Heart right ventricle (tissue), 16 donors: ENCODE measurements at regions of chr1 and their contacts with region 1.

Region 1: DNA sequence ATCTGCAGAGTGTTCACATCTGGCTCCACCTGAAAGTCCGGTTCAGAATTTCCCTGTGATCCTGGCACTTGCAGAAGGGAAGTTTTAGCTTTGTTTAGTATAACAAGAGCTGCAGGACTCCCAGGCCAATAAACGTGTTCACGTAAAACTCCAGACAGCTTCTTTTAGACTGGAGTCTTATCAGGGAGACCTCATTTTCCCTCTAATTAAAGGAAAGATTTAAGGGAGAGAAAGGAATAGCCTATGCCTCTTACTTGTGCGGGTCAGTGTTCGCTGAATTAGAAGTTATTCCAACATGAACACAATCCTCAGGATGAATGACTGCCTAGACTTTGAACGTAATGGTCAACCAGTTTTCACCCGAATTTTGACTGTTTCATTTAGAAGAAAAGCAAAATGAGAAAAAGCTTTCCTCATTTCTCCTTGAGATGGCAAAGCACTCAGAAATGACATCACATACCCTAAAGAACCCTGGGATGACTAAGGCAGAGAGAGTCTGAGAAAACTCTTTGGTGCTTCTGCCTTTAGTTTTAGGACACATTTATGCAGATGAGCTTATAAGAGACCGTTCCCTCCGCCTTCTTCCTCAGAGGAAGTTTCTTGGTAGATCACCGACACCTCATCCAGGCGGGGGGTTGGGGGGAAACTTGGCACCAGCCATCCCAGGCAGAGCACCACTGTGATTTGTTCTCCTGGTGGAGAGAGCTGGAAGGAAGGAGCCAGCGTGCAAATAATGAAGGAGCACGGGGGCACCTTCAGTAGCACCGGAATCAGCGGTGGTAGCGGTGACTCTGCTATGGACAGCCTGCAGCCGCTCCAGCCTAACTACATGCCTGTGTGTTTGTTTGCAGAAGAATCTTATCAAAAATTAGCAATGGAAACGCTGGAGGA is 202.1 kb upstream of the SGIP1 start:
- DNase-seq: peak; percentile 68 to 83
- ATAC-seq: peak; percentile 44 to 87 (median 66)
- H3K4me3 ChIP-seq: peak overlapping the region; percentile 32 to 72 (median 60)
- H3K27ac ChIP-seq: peak overlapping the region; percentile 74 to 97 (median 89)
- H3K4me1 ChIP-seq: peaks cover 0 to 77% (median 33%) of the 10 kb centered on the region in 9 donors
- H3K27me3 ChIP-seq: no peaks in the 10 kb centered on the region
- CTCF ChIP-seq: peak in 7 of 9 donors; percentile 13 to 42 (median 35)

Region 2: GRCh38 chr1:66265796-66266195 is 66.1 kb before region 1 on chr1:
- intact Hi-C with region 1: loop called in 7 of 10 experiments (anchors 2 to 10 kb)
- DNase-seq: no peak
- ATAC-seq: peak in 7 of 8 donors; percentile 34 to 84 (median 52)
- H3K4me3 ChIP-seq: no peak overlapping the region
- H3K27ac ChIP-seq: peak overlapping the region in 6 of 10 donors; percentile 8 to 73 (median 44)
- H3K4me1 ChIP-seq: peaks cover 4 to 84% (median 45%) of the 10 kb centered on the region in 9 donors
- H3K27me3 ChIP-seq: no peaks in the 10 kb centered on the region
- CTCF ChIP-seq: peak in 2 of 9 donors; percentile 22 to 26

Region 3: DNA sequence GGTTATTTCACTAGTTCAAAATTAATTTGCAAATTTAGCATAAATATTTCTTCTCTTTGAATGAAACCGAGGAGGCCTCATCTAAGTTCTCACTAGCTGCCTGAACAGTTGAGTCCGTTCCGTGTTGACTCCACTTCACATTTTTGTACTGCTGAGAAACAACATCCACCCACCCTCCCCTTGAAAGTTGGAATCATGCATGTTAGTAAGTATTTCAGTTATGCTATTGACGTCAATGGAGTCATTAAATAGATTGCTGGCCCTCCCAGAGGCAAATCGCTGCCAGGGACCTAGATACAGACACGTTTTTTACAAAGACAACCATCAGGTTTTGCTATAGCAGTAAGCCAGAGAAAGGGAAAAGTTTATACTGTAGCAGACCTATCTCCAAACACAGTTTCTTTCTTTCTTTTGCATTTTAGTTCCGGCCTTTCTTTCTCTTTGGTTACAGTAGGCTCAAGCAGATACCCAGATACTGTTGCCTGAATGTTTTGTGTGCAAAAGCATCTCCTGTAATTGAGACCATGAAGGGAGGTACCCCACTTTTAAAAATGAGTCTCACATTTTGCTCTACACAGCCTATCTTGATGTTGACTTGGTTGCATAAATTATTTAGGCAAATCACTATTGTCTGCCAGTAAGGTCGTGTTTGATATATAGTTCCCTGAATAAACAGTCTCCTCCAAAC is 60.5 kb before region 1 on chr1:
- intact Hi-C with region 1: loop called (anchors 1 to 10 kb)
- DNase-seq: peak; percentile 69 to 95
- ATAC-seq: peak; percentile 89 to 96 (median 94)
- H3K4me3 ChIP-seq: peak overlapping the region in 7 of 10 donors; percentile 3 to 41 (median 20)
- H3K27ac ChIP-seq: peak overlapping the region; percentile 63 to 91 (median 88)
- H3K4me1 ChIP-seq: peaks cover 12 to 95% (median 81%) of the 10 kb centered on the region in 9 donors
- H3K27me3 ChIP-seq: no peaks in the 10 kb centered on the region
- CTCF ChIP-seq: no peak

Region 4: GRCh38 chr1:66282343-66282852 is 49.5 kb before region 1 on chr1:
- intact Hi-C with region 1: loop called in 3 of 10 experiments (anchors 5 to 10 kb)
- DNase-seq: peak in 1 of 2 donors; percentile 45
- ATAC-seq: peak in 7 of 8 donors; percentile 30 to 78 (median 54)
- H3K4me3 ChIP-seq: no peak overlapping the region
- H3K27ac ChIP-seq: peak overlapping the region in 7 of 10 donors; percentile 1 to 77 (median 42)
- H3K4me1 ChIP-seq: peaks cover 0 to 63% (median 24%) of the 10 kb centered on the region in 9 donors
- H3K27me3 ChIP-seq: no peaks in the 10 kb centered on the region
- CTCF ChIP-seq: peak in 5 of 9 donors; percentile 23 to 45 (median 37)

Region 5: GRCh38 chr1:66300972-66301451 is 30.9 kb before region 1 on chr1:
- intact Hi-C with region 1: no loop called
- DNase-seq: no peak
- ATAC-seq: peak in 7 of 8 donors; percentile 46 to 85 (median 68)
- H3K4me3 ChIP-seq: peak overlapping the region in 5 of 10 donors; percentile 10 to 34 (median 27)
- H3K27ac ChIP-seq: peak overlapping the region in 8 of 10 donors; percentile 7 to 74 (median 48)
- H3K4me1 ChIP-seq: peaks cover 0 to 39% (median 5%) of the 10 kb centered on the region in 9 donors
- H3K27me3 ChIP-seq: no peaks in the 10 kb centered on the region
- CTCF ChIP-seq: no peak

Region 6: GRCh38 chr1:66380452-66381212 is 48.7 kb after region 1 on chr1:
- intact Hi-C with region 1: no loop called
- DNase-seq: no peak
- ATAC-seq: peak in 5 of 8 donors; percentile 46 to 66 (median 55)
- H3K4me3 ChIP-seq: no peak overlapping the region
- H3K27ac ChIP-seq: no peak overlapping the region
- H3K4me1 ChIP-seq: peaks cover 0 to 39% (median 1%) of the 10 kb centered on the region in 9 donors
- H3K27me3 ChIP-seq: no peaks in the 10 kb centered on the region
- CTCF ChIP-seq: no peak

Region 7: DNA sequence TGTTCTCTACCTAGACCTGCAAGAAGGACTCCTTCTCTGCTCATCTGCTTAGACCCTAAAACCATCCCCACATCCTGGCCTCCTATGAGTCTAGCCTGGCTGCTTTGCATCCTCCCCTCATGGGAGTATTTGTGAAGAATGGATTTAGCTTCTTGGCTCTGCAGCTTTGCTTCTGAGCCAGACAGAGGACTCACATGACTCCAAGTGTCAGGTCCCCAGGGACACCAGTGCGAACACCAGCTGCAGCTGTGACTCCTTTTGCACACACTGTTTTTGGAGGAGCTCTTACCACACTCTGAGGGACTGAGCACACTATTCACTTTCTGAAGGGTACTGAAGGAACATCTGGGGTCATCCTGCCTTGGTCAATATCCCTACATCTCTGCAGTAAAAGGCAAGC is 70.3 kb after region 1 on chr1:
- intact Hi-C with region 1: loop called in 2 of 10 experiments (anchors 5 to 10 kb)
- DNase-seq: peak; percentile 68 to 88
- ATAC-seq: peak; percentile 85 to 97 (median 94)
- H3K4me3 ChIP-seq: no peak overlapping the region
- H3K27ac ChIP-seq: peak overlapping the region in 8 of 10 donors; percentile 13 to 76 (median 28)
- H3K4me1 ChIP-seq: peaks cover 9 to 34% (median 20%) of the 10 kb centered on the region in 9 donors
- H3K27me3 ChIP-seq: no peaks in the 10 kb centered on the region
- CTCF ChIP-seq: no peak